ENCODE measurements at regions of chr20 and their contacts with region 1.

Region 1: DNA sequence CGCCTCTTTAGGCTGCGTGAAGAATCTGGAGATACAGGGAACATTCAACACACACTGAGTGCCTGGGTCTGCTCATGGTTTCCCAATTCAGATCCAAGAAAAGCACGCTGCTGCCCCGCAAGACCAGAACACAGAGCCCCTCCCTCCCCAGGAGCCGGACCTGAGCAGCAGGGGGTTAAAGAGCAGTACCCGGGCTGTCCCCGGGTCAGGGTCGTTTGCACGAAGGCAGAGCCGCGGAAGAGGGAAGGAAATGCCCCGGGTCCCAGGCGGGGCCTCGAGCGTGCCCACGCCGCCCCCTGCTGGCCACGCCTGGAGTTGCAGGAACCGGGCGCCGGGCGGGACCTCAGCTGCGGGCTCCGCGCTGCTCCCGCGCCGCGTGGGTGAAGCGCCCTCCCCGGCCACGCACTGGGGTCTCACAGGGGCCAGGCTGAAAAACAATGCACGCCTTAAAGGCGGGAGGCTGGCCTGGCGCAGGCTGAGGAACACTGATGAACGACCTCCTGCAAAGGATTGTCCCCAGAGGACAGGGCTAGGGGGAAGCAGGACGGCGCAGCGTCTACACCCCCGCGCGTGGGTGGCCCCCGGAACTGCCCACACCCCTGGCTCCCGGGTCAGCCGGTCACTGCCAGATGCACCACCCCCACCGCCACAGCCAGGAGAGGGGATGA is 48.9 kb downstream of the ANKRD60 start:
- DNase-seq: no peak
- ATAC-seq: peak; percentile 98
- H3K4me3 ChIP-seq: peak overlapping the region; percentile 25; the same call in 1 of the 2 replicates
- H3K27ac ChIP-seq: no peak overlapping the region
- H3K4me1 ChIP-seq: peaks cover 2% of the 10 kb centered on the region; the same call in 1 of the 2 replicates
- H3K27me3 ChIP-seq: peaks cover 32% of the 10 kb centered on the region
- CTCF ChIP-seq: peak; percentile 88
- POLR2A ChIP-seq: no peak
- RAD21 ChIP-seq: peak; percentile 81

Region 2: GRCh38 chr20:57622579-57623377 is 556.8 kb before region 1 on chr20:
- CTCF ChIA-PET with region 1: no interaction called
- POLR2A ChIA-PET with region 1: no interaction called
- dilution Hi-C with region 1: no loop called
- in situ Hi-C with region 1: no loop called
- intact Hi-C with region 1: loop called (anchors 1 kb)
- DNase-seq: peak; percentile 37
- ATAC-seq: peak; percentile 72
- H3K4me3 ChIP-seq: no peak overlapping the region
- H3K27ac ChIP-seq: no peak overlapping the region
- H3K4me1 ChIP-seq: peaks cover 2% of the 10 kb centered on the region; the same call in 1 of the 2 replicates
- H3K27me3 ChIP-seq: peaks cover 7% of the 10 kb centered on the region
- CTCF ChIP-seq: peak; percentile 56
- POLR2A ChIP-seq: no peak
- RAD21 ChIP-seq: peak; percentile 74

Region 3: DNA sequence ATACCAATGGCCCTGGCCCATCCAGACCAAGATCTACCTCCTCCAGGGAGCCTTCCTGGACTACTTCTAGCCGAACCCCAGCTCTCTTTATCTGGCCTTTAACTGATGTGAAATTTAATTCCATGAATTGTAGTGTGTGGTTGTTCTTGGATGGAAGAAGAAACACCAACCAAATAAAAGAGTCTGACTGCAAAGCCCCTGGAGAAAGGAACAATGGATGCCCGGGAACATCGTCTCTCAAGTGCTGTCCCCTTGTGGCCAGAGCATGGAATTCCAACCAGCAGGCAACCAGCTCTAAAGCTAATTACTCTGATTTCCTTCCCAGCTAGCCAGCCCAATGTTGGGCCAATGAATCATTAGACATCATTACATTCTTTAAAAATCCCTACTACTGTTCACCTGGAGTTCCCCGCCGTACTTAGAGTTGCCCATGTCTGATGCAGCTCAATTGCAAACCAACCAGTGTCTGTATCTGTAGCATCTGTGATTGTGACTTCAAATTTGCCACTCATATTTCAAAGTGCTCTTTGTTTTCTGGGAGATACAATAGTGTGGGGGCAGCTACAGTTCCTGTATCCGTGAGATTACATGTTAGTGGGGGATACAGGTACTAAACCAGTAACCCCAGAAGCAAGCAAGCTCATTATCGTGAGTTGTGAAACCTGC is 92.2 kb before region 1 on chr20:
- CTCF ChIA-PET with region 1: no interaction called
- POLR2A ChIA-PET with region 1: no interaction called
- dilution Hi-C with region 1: no loop called
- in situ Hi-C with region 1: no loop called
- intact Hi-C with region 1: loop called (anchors 5 kb)
- DNase-seq: peak; percentile 27
- ATAC-seq: peak; percentile 72
- H3K4me3 ChIP-seq: no peak overlapping the region
- H3K27ac ChIP-seq: no peak overlapping the region
- H3K4me1 ChIP-seq: no peaks in the 10 kb centered on the region
- H3K27me3 ChIP-seq: no peaks in the 10 kb centered on the region; the same call in 1 of the 2 replicates
- CTCF ChIP-seq: peak; percentile 73
- POLR2A ChIP-seq: no peak
- RAD21 ChIP-seq: peak; percentile 70

Measured in IMR-90 (cell line).